HEK293 (cell line): ENCODE measurements at regions of chr13 and their contacts with region 1.

Region 1: GRCh38 chr13:77584106-77584505 is 48.6 kb downstream of the SCEL start:
- H3K4me3 ChIP-seq: no peak overlapping the region
- H3K27ac ChIP-seq: no peak overlapping the region
- H3K4me1 ChIP-seq: no peaks in the 10 kb centered on the region
- CTCF ChIP-seq: no peak

Region 2: DNA sequence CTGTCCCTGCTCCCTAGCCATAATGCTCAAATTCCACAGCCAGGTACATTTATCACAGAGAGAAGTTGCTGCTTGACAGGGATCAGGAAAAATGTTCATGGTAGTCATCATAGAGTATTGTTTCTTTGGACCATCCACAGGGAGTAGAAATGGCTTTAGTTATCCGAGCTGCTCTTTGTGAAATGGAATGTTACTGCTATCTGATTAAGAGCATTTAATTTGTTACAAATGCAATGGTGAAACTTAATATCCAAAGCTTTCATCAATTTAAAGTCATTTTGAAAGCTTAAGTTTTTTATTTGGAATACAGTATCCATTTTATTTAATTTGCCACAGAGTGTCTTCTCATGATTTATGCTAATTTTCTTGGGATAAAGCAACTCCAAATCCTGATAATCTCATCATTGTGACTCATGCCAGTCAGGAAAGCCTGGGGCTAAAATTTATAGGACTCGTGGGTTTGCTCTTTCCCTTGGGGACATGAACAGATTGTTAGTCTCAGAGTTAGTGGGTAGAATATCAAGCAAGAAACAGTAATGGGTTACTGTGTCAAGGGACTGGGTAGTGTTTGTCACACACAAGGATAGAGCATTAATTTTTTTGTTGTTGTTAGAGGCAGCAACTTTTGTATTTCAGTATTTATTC is 11.2 kb after region 1 on chr13:
- CTCF ChIA-PET with region 1: interaction called, 11 read pairs
- POLR2A ChIA-PET with region 1: no interaction called
- H3K4me3 ChIP-seq: no peak overlapping the region
- H3K27ac ChIP-seq: no peak overlapping the region
- H3K4me1 ChIP-seq: no peaks in the 10 kb centered on the region
- CTCF ChIP-seq: no peak